AG04449 (cell line): ENCODE measurements at regions of chr1 and their contacts with region 1.

Region 1: DNA sequence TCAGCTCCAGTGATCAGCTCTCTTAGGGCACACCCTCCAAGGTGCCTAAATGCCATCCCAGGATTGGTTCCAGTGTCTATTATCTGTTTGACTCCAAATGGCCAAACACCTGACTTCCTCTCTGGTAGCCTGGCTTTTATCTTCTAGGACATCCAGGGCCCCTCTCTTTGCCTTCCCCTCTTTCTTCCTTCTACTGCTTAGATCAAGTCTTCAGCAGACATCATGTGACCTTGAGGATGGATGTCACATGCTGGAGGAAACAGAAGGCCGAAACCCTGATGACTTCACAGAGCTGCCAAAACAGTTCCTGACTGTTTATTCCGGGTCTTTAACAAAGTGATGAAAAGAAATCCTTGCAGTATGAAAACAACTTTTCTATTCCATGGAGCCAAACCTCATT is 24.4 kb upstream of the WDR26 start:
- DNase-seq: no peak
- H3K4me3 ChIP-seq: no peak overlapping the region
- CTCF ChIP-seq: no peak

Region 2: GRCh38 chr1:223700942-223701637 is 757.9 kb before region 1 on chr1:
- CTCF ChIA-PET with region 1: interaction called, 10 read pairs
- POLR2A ChIA-PET with region 1: no interaction called
- DNase-seq: peak; percentile 97
- H3K4me3 ChIP-seq: peak overlapping the region; percentile 52
- CTCF ChIP-seq: no peak

Region 3: GRCh38 chr1:224266105-224266935 is 192.7 kb before region 1 on chr1:
- CTCF ChIA-PET with region 1: no interaction called
- POLR2A ChIA-PET with region 1: no interaction called
- DNase-seq: no peak
- H3K4me3 ChIP-seq: no peak overlapping the region
- CTCF ChIP-seq: no peak

Region 4: DNA sequence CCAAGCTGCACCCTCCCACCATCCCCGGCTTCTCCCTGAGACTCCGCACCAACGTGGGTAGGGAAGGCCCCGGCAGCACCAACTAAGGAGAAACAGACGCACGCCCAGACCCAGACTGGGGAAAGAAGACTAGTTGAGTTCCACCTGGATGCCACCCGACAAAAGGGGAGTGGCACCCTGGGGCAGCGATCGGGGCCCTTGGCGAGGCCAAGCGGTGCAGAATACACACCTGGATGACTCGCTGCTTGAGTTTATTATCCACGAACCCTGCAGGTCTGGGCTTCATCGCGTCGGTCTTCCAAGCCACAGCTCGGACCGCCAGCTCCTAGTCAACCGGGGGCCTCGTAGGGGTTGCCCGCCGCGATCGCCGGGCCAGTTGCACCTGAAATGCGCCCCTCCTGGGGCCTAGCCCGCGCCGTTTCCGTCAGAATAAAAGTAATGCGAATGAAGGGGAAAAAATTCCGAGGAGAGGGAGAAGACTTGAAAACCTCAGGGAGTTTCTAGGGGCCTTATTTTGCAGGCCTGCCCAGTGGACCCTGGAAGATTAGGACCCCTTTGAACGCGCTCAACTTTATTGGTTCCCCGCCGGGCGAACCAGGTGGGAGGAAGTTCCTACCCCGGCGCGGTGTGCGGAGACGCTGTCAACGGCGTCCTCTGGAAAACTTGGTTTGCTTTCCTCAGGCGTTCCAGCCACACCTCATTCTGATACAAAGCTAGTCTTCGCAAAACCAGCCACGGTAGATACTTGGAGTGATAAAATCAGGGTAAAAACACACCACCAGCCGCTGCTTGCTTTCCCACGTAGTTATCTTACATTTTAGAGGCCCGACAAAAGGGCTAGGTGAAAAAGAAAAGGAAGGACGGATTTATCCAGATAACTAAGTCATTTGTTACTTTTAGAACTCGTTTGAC is 128.9 kb before region 1 on chr1 and contains the start of gene NVL:
- CTCF ChIA-PET with region 1: interaction called, 22 read pairs
- POLR2A ChIA-PET with region 1: no interaction called
- DNase-seq: peak; percentile 33
- H3K4me3 ChIP-seq: peak within 1 kb of the TSS; percentile 99
- CTCF ChIP-seq: no peak

Region 5: DNA sequence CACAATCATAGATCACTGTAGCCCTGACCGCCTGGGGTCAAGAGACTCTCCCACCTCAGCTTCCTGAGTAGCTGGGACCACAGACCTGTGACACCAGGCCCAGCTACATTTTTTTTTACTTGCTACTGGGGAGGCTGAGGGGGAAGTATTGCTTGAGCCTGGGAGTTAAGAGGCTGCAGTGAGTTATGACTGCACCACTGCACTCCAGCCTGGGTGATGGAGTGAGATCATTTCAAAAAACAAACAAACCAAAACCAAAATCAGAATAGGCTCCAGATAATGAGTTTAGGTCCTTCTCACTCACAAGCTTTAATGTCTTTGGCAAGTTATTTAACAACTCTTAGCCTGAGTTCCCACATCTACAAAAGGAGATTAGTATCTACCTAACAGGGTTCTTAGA is 47.2 kb before region 1 on chr1:
- CTCF ChIA-PET with region 1: interaction called, 10 read pairs
- POLR2A ChIA-PET with region 1: no interaction called
- DNase-seq: no peak
- H3K4me3 ChIP-seq: no peak overlapping the region
- CTCF ChIP-seq: no peak

Region 6: GRCh38 chr1:224447251-224447650 is 11.7 kb before region 1 on chr1:
- CTCF ChIA-PET with region 1: interaction called, 36 read pairs
- POLR2A ChIA-PET with region 1: no interaction called
- DNase-seq: no peak
- H3K4me3 ChIP-seq: no peak overlapping the region
- CTCF ChIP-seq: no peak

Region 7: DNA sequence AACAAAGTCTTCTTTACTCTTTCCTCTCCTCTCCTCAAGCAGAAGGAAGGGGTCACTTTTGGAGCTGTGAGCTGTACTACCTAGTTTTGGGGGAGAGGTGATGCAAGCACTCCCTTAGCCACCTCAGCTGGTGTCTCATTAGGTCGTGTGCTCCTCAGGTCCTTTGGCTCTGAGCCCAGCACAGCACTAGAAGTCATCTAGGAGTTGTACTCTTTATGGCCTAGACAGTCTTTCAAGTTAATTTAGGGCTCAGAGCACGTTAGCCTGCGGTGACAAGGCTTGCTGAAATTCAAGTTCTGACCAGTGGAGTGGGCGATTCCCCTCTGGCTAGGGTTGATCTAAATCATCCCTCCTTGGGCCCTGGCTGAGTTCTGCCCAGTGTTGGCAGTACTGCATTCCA is 23.6 kb after region 1 on chr1:
- CTCF ChIA-PET with region 1: interaction called, 11 read pairs
- POLR2A ChIA-PET with region 1: interaction called, 3 read pairs
- DNase-seq: no peak
- H3K4me3 ChIP-seq: no peak overlapping the region
- CTCF ChIP-seq: no peak

Region 8: GRCh38 chr1:224623743-224624333 is 164.8 kb after region 1 on chr1:
- CTCF ChIA-PET with region 1: no interaction called
- POLR2A ChIA-PET with region 1: no interaction called
- DNase-seq: peak; percentile 58
- H3K4me3 ChIP-seq: no peak overlapping the region; the same call in 1 of the 2 replicates
- CTCF ChIP-seq: no peak